Activated CD4-positive, alpha-beta T cell treated with anti-CD3 and anti-CD28 coated beads, Interleukin-2, amount 10 ng/mL, durations not matched to agents 24 days and 14 days (primary cell): ENCODE measurements at regions of chr1 and their contacts with region 1.

Region 1: DNA sequence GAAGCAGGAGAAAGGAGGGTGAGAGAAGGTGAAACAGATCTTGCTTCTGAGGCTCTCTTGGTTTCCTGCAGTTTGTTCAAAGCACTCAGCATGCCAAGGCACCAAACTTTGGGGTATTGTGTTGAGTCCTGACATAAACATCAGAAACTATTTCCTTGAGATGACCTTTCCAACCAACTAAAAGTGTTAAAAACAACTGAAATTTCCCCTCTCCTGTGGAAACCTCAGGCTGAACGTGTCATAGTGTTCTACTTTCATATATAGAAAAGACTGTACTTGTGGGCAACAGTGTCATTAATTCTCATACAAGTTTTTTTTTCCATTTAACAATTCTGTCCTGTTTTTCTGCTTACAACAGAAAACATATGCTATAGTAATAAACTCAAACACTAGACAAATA is 6.3 kb upstream of the LYST start:
- DNase-seq: peak; percentile 82
- H3K4me3 Mint-ChIP-seq: peak overlapping the region; percentile 66
- H3K27ac Mint-ChIP-seq: peak overlapping the region; percentile 98
- H3K4me1 Mint-ChIP-seq: peaks cover 66% of the 10 kb centered on the region
- H3K27me3 Mint-ChIP-seq: no peaks in the 10 kb centered on the region

Region 2: DNA sequence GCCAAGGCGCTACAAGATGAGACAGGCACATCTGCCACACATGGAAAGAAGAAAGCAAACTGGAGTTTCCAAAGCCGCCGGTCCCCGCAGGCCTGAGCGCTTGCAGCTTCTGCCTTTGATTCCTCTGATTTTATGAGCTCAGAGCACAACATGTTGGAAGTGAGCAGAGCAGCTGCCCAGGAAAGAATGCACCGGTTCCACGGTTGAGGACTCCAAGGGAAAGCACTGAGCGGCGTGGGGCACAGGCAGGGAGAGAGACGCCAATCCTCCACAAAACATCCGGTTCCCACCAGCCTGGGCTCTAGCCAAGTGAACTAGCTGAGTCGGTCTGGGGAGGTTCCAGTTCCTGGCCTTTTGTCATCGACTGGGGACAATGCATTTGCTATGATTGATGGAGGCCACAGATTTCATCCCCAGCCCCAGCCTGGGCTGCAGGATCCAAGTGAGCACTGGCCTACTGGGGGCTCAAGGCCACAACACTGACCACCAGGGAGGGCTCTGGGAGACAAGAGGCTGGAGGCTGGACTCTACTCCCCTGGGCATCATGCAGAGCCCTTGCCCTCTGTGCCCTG is 1010.0 kb before region 1 on chr1:
- intact Hi-C with region 1: no loop called
- DNase-seq: no peak
- H3K4me3 Mint-ChIP-seq: no peak overlapping the region
- H3K27ac Mint-ChIP-seq: peak overlapping the region; percentile 20
- H3K4me1 Mint-ChIP-seq: peaks cover 30% of the 10 kb centered on the region
- H3K27me3 Mint-ChIP-seq: no peaks in the 10 kb centered on the region

Region 3: DNA sequence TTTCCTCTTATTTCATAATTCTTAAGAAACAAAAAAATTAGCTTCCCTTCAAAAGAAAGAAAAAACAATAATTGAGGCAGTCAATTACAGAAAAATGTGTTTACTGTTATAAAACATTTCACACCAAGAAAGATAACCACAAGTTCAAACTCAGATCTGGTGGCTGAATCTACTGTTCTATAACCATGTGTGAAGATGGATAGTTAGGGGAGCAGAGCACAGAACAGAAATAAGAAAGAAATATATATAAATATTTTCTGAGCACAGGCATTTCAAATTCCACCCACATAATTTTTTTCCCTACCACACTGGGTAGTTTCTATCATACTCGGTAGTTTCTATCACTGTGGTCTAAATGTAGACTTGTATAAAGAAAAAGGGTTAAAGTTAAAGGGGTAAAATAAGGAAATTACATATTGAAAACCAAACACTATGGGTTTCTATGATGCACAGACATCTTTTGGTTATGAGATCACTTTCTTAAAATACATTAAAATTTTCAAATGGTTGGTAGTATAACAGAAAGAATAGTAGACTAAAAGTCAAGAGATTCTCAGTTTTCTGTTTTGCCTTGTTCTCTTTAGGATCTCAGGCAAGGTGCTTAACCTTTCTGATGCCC is 17.1 kb before region 1 on chr1:
- intact Hi-C with region 1: loop called (anchors 2 kb)
- DNase-seq: no peak
- H3K4me3 Mint-ChIP-seq: no peak overlapping the region
- H3K27ac Mint-ChIP-seq: peak overlapping the region; percentile 56
- H3K4me1 Mint-ChIP-seq: peaks cover 32% of the 10 kb centered on the region
- H3K27me3 Mint-ChIP-seq: no peaks in the 10 kb centered on the region

Region 4: DNA sequence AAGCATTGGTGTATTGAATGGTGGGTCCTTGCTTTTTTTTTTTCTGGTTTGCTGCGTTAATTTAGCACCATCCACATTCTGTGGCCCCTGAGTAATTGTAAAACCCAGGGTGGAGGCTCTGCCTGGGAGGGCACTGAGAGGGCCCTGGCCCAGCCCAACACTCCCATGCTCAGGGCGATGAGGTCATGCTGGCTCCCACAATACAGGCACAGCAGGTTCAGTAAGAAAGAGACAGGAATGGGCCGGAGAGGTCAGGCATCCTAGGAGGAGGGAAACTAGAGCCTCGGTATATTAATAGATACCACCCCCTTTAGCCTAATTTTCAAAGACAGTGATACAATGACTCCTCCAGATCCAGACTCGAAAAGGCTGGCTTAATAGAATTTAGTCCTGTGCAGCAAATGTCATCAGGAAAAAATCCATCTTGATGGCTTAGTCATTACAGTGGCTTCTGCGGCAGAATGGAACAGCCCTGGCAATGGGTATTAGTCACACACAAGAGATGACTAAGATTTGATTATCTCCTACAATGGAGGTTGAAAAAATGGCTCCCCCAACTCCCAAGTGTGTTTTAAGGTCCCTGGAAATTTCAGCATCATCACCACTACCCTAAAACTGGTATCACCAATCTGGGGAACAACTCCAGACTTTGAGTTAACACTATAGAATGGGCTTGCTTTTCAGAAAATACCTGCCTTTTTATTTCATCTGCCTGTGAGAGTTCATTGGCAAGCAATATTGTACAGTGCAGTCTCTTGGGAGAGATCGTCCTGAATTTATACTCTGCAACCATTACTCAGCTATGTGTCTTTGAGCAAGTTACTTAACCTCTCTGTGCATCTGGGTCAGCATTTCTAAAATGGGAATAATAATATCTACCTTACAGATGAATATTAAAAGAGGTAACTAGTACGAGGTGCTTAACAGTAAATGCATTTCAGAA is 37.6 kb after region 1 on chr1:
- intact Hi-C with region 1: loop called (anchors 1 kb)
- DNase-seq: peak; percentile 69
- H3K4me3 Mint-ChIP-seq: peak overlapping the region; percentile 18
- H3K27ac Mint-ChIP-seq: peak overlapping the region; percentile 84
- H3K4me1 Mint-ChIP-seq: peaks cover 33% of the 10 kb centered on the region
- H3K27me3 Mint-ChIP-seq: peaks cover 4% of the 10 kb centered on the region

Region 5: DNA sequence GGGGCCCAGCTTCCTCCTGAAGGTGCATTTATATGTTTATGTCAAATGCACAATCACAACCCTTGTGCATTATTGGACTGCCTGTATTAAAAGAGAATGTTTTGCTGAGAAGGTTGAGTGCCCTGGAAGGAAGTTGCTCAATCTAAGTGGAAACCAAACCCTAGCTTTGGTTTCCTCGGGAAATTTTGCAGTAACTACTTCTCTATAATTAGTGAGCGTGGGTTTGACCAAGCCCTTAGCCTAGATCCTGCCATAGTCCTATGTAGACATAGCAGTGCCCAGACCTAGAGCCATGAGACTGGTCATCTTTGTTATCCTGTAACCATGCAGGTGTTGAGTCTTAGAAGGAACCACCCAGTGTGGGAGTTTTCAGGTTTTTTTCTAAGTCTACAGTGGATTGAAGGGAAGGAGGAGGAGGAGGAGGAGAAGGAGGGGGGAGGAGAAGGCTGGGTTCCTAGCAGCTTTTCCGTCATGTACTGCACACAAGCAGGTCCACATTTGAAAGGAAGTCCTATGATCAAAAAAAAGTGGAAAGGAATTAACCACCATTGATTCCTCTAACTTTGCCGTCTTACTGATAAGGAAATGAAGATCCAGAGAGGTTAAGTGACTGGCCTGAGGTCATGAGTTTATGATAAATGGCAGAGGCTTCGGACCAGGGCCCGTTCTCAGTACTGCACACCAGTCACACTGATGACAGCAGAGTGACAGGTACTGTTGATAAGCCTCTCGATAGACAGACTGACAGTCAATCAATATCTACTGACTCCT is 65.8 kb after region 1 on chr1:
- intact Hi-C with region 1: loop called (anchors 2 kb)
- DNase-seq: peak; percentile 64
- H3K4me3 Mint-ChIP-seq: peak overlapping the region; percentile 36
- H3K27ac Mint-ChIP-seq: peak overlapping the region; percentile 83
- H3K4me1 Mint-ChIP-seq: peaks cover 44% of the 10 kb centered on the region
- H3K27me3 Mint-ChIP-seq: peaks cover 6% of the 10 kb centered on the region

Region 6: DNA sequence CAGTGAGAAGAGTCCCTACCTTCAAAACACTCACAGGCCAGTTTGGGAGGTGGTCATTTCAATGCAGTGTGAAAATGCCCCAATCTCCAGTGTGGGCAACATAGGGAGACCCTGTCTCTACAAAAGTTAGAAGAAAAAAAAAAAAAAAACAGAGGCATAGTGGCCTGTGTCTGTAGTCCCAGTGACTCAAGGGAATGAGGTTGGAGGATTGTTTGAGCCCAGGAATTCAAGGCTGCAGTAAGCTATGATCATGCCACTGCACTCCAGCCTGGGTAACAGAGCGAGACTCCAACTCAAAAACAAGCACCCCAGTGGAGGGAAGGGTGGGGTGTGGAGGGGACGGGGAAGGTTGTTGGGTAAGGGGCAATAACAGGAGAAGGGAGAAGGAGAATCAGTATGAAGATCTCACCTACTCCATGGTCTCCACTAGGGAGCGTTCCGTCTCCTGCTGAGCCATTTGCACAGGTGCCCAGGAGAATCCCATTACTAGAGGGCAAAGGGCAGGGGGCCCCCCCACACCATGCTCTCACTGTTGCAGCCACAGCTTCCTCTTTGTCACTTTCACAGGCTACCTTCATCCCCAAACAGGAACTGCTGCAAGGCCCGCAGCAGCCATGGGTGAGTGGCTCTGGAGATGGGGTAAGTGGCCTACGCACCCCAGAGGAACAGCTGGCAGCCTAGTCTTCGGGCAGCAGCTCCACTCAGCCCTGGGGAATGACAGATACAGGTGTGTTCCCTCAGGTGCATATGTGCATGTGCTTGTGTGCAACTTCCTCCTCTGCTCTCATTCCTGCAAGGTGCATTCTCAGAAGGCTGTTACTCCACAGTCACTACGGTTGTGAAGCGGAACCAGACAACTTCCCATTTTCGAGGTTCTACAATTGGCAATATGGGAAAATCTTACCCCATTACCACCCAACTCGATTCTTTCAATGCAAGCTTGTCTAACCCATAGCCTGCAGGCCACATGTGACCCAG is 81.5 kb after region 1 on chr1:
- intact Hi-C with region 1: loop called (anchors 1 kb)
- DNase-seq: peak; percentile 78
- H3K4me3 Mint-ChIP-seq: no peak overlapping the region
- H3K27ac Mint-ChIP-seq: no peak overlapping the region
- H3K4me1 Mint-ChIP-seq: peaks cover 37% of the 10 kb centered on the region
- H3K27me3 Mint-ChIP-seq: peaks cover 2% of the 10 kb centered on the region

Region 7: GRCh38 chr1:236089046-236089773 is 216.2 kb after region 1 on chr1:
- intact Hi-C with region 1: no loop called
- DNase-seq: no peak
- H3K4me3 Mint-ChIP-seq: no peak overlapping the region
- H3K27ac Mint-ChIP-seq: no peak overlapping the region
- H3K4me1 Mint-ChIP-seq: peaks cover 6% of the 10 kb centered on the region
- H3K27me3 Mint-ChIP-seq: peaks cover 15% of the 10 kb centered on the region